B cell (primary cell): ENCODE measurements at regions of chr1 and their contacts with region 1.

Region 1: GRCh38 chr1:204814181-204814884 is 56.3 kb upstream of the NFASC start:
- DNase-seq: no peak
- ATAC-seq: no peak
- H3K4me3 ChIP-seq: no peak overlapping the region
- H3K4me3 Mint-ChIP-seq: no peak overlapping the region
- H3K27ac ChIP-seq: no peak overlapping the region
- H3K27ac Mint-ChIP-seq: no peak overlapping the region
- H3K4me1 ChIP-seq: no peaks in the 10 kb centered on the region
- H3K4me1 Mint-ChIP-seq: no peaks in the 10 kb centered on the region
- H3K27me3 ChIP-seq: peaks cover 0 to 22% (median 5%) of the 10 kb centered on the region in 4 experiments
- H3K27me3 Mint-ChIP-seq: peaks cover 41% of the 10 kb centered on the region
- CTCF ChIP-seq: no peak

Region 2: GRCh38 chr1:204791453-204792353 is 22.6 kb before region 1 on chr1:
- CTCF ChIA-PET with region 1: interaction called, 11 read pairs
- POLR2A ChIA-PET with region 1: no interaction called
- intact Hi-C with region 1: no loop called
- DNase-seq: peak; percentile 82
- ATAC-seq: peak; percentile 85
- H3K4me3 ChIP-seq: no peak overlapping the region
- H3K4me3 Mint-ChIP-seq: no peak overlapping the region
- H3K27ac ChIP-seq: no peak overlapping the region
- H3K27ac Mint-ChIP-seq: no peak overlapping the region
- H3K4me1 ChIP-seq: no peaks in the 10 kb centered on the region
- H3K4me1 Mint-ChIP-seq: peaks cover 2% of the 10 kb centered on the region
- H3K27me3 ChIP-seq: peaks cover 0 to 16% (median 8%) of the 10 kb centered on the region in 4 experiments
- H3K27me3 Mint-ChIP-seq: peaks cover 39% of the 10 kb centered on the region
- CTCF ChIP-seq: peak; percentile 96